ENCODE measurements at regions of chr9 and their contacts with region 1.

Region 1: DNA sequence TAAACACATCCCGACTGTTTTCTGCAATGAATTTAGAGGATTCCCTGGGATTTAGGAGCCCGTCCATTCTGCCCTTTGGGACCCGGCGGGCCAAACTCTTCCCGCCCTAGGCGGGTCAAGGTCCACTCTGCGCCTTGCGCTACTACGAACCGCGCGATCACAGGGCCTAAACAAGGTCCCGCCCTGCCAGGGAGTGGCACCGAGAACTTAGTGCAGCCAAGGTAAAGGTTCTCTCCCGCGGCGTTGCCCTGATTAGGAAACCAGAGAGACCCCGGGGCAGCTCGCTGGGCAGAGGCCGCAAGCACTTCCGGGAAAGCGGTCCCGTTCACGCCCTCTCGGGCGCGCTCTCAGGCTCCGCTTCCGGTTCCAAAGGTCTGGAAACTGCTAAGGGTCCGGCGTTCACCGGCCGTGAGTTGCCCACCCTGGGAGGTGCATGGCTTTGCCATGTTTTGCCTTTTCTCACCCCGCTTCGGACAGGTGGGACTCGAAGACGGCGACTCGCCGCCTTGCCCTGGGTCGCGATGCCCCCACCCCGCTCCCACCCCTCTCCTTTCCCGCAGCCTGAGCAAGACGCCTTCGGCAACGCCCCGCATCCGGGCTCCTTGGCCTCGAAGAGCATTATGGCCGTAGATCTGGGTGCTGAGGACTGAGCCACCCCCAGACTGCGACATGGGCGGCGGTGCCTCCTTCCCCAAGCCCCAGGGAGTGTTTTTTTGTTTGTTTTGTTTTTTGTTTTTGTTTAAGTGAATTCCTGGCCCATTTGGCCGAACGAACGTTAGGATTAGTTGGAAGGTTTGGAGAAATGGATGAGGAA is 23.4 kb downstream of the HNRNPK start:
- DNase-seq: peak; percentile 92

Region 2: DNA sequence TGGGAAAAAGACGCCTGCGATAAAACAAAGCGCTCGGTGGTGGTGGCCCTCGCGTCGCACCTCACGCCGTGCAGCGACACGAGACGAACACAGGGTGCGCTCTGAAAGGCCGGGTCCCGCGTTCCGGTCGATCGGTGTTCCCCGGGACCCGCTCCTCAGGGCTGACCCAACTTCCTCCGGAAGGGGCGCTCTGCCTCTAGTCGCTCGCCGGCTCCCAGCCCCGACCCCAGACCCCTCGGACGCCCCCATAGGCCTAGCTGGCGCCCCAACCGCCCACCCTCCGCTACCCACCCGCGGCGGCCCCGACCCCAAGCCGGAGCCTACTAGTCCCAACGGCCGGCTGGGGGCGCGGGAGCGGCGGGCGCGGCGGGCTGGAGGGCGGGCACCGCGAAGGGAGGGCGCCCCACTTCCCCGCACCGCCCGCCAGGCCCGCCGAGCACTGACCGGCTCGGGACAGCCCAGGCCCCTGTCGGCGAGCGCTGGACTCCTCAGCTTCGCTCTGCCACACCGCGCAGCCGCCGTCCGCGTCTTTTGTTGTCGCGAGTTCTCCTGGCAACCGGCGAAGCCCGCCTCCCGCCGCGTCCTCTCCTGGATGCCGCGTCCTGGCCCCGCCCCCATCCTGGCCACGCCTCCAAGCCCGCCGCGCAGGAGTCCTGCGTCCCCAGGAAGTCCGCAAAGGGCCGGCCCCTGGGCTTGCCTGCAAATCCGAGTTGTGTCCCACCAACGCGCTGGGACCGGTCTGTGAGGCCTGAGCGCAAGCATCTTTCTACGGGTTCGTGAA is 35.5 kb before region 1 on chr9 and contains the start of gene KIF27:
- intact Hi-C with region 1: loop called (anchors 5 kb)
- DNase-seq: peak; percentile 100
- total RNA-seq, gene KIF27: 3.0 TPM

Region 3: DNA sequence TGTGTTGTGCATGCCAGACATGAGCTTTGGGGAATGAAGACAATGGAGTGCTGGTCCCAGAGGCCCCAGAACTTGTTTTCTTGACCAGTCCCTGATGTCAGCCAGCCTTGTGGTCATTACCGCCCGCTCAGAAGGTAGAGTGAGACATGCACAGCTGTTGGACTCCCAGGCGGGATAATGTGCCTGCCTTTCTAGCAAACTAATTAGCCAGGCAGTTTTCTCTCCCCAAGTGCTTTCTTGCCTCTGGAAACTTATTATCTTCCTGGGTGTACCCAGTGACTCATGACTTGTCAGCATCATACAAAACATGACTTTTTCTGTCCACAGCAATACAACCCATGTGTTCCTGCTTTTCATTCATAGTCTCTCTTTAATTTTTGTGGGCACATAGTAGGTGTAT is 155.1 kb after region 1 on chr9:
- intact Hi-C with region 1: no loop called
- DNase-seq: no peak